OCI-LY7 (cell line): ENCODE measurements at regions of chr13 and their contacts with region 1.

Region 1: DNA sequence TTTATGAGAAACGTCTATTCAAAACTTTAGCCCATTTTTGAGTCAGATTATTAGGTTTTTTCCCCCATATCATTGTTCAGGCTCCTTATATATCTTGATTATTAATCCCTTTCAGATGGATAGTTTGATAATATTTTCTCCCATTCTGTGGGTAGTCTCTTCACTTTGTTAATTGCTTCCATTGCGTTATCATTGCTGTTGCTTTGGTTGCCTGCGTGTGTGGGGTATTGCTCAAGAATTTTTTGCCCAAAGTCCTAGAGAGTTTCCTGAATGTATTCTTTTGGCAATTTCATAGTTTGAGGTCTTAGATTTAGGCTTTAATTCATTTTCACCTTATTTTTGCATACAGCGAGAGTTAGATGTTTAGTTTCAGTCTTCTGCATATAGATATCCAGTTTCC is 25.8 kb upstream of the PRR20A start:
- DNase-seq: no peak
- H3K4me3 ChIP-seq: no peak overlapping the region
- H3K27ac ChIP-seq: no peak overlapping the region
- H3K4me1 ChIP-seq: no peaks in the 10 kb centered on the region
- CTCF ChIP-seq: no peak

Region 2: DNA sequence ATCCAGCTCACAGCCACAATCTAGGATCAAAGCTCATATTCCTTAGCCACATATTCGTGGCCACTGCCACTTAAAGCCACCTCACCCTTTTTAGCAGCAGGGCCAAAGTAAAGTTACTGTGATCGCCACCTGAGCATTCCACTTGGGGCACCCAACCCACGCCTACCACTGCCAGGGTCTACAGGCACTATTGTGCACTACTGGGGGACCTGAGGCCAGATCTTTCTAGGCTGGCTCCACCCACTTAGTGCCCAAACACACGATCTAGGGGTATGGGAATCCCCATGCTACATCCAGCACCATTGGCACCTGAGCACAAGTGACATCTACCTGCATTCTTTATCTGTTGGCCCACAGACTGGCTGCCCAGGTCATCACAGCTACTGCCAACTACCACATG is 492.1 kb before region 1 on chr13:
- CTCF ChIA-PET with region 1: no interaction called
- POLR2A ChIA-PET with region 1: interaction called, 13 read pairs
- intact Hi-C with region 1: no loop called
- DNase-seq: no peak
- H3K4me3 ChIP-seq: no peak overlapping the region
- H3K27ac ChIP-seq: no peak overlapping the region
- H3K4me1 ChIP-seq: no peaks in the 10 kb centered on the region
- CTCF ChIP-seq: no peak